ENCODE measurements at regions of chr1 and their contacts with region 1.

Region 1: DNA sequence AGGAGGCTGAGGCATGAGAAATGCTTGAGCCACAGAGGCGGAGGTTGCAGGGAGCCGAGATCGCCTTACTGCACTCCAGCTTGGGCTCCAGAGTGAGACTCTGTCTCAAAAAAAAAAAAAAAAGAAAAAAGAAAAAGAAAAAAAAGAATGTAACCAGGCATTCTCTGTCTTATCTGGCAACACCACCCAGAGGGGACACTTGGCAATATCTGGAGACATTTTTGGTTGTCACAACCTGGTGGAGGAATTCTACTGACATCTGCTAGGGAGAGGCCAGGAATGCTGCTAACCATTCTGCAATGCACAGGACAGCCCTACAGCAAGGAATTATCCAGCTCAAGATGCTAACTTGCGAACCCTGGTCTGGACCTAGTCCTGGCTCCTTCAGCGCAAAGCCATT is 2.3 kb upstream of the CNR2 start:
- DNase-seq: no peak
- H3K4me3 ChIP-seq: no peak overlapping the region
- H3K27ac ChIP-seq: no peak overlapping the region
- H3K4me1 ChIP-seq: peaks cover under 1 to 12% (median 11%) of the 10 kb centered on the region in 4 donors
- H3K27me3 ChIP-seq: peaks cover 0 to 15% (median 0%) of the 10 kb centered on the region in 4 donors
- CTCF ChIP-seq: no peak
- EP300 ChIP-seq: no peak
- POLR2A ChIP-seq: no peak

Region 2: GRCh38 chr1:23772049-23772853 is 143.2 kb before region 1 on chr1:
- intact Hi-C with region 1: loop called (anchors 2 kb)
- DNase-seq: peak; percentile 96
- H3K4me3 ChIP-seq: no peak overlapping the region
- H3K27ac ChIP-seq: no peak overlapping the region
- H3K4me1 ChIP-seq: peaks cover 10 to 17% (median 13%) of the 10 kb centered on the region in 4 donors
- H3K27me3 ChIP-seq: no peaks in the 10 kb centered on the region
- CTCF ChIP-seq: peak; percentile 90 to 99 (median 91)
- EP300 ChIP-seq: no peak
- POLR2A ChIP-seq: no peak

Measured in esophagus muscularis mucosa (tissue), 4 donors.